ENCODE measurements at regions of chr22 and their contacts with region 1.

Region 1: GRCh38 chr22:32528984-32529982 is 54.7 kb downstream of the FBXO7 start:
- DNase-seq: peak; percentile 93 to 96 (median 94)
- ATAC-seq: peak; percentile 79 to 80
- H3K4me3 ChIP-seq: no peak overlapping the region
- H3K27ac ChIP-seq: peak overlapping the region; percentile 90
- H3K4me1 ChIP-seq: peaks cover 18% of the 10 kb centered on the region
- H3K27me3 ChIP-seq: no peaks in the 10 kb centered on the region

Region 2: DNA sequence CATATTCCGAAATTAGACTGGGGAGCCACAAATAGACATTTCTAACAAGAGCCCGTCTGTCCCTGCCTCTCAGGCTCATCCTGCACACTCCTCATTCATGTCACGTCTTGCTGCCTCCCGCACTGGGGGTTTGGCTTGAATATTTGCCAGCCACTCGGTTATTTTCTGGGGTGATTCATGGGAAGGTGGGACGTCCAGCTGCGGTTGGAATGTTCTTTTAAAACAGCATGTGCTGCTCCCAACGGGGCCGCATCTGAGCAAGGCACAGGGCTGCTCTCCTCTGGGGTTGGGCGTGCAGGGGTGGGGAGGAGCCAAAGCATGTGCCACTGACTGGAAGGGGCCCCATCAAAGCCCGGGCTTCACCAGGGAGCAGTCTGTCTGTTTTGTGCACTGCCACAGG is 248.2 kb before region 1 on chr22:
- intact Hi-C with region 1: no loop called
- DNase-seq: no peak
- ATAC-seq: no peak
- H3K4me3 ChIP-seq: no peak overlapping the region
- H3K27ac ChIP-seq: no peak overlapping the region
- H3K4me1 ChIP-seq: no peaks in the 10 kb centered on the region
- H3K27me3 ChIP-seq: no peaks in the 10 kb centered on the region

Region 3: GRCh38 chr22:32584650-32585049 is 55.4 kb after region 1 on chr22:
- intact Hi-C with region 1: no loop called
- DNase-seq: no peak
- ATAC-seq: peak; percentile 41 to 57
- H3K4me3 ChIP-seq: no peak overlapping the region
- H3K27ac ChIP-seq: no peak overlapping the region
- H3K4me1 ChIP-seq: peaks cover 2% of the 10 kb centered on the region
- H3K27me3 ChIP-seq: no peaks in the 10 kb centered on the region

Region 4: GRCh38 chr22:32603656-32604435 is 74.6 kb after region 1 on chr22:
- intact Hi-C with region 1: no loop called
- DNase-seq: peak in 1 of 3 donors; percentile 61
- ATAC-seq: peak; percentile 55 to 82
- H3K4me3 ChIP-seq: no peak overlapping the region
- H3K27ac ChIP-seq: peak overlapping the region; percentile 30
- H3K4me1 ChIP-seq: peaks cover 3% of the 10 kb centered on the region
- H3K27me3 ChIP-seq: no peaks in the 10 kb centered on the region

Region 5: DNA sequence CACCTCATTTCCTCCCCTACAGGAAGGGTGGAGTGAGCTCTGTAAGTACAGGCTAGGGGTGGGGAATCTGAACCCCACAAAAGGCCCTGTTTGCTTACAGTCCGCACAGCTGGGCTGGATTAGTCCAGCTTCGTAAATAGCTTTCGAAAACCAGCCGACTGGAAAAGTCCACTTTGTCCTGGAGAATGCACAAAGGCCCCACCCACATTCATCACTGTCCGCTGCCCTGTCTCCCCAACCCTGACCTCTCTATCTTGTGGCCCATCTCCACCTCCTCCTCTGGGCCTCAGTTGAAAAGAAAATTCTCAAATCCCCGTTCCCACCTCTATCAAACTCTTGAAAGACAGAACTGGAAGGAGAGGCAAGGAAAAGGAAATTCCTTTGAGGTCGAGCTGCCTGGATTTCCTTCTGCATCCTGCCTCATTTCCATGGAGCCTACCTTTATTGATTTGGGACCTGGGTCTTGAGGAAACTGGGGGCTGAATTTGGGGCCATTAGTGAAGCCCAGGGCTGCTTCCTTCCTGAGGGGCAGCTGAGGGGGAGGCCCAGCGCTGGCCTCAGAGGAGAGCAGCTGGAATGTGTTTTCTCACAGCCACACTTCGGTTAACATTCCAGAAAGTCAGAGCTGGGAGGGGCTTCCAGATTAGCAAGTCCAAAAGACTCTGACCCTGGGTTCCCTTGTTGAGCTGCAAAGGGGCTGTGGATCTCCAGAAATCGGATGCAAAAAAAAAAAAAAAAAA is 92.9 kb after region 1 on chr22:
- intact Hi-C with region 1: loop called in 2 of 4 experiments (anchors 5 to 10 kb)
- DNase-seq: peak; percentile 66 to 83 (median 83)
- ATAC-seq: peak; percentile 64 to 77
- H3K4me3 ChIP-seq: no peak overlapping the region
- H3K27ac ChIP-seq: peak overlapping the region; percentile 97
- H3K4me1 ChIP-seq: peaks cover 55% of the 10 kb centered on the region
- H3K27me3 ChIP-seq: no peaks in the 10 kb centered on the region

Region 6: GRCh38 chr22:32649515-32650200 is 120.4 kb after region 1 on chr22:
- intact Hi-C with region 1: loop called in 1 of 4 experiments (anchors 10 kb)
- DNase-seq: peak in 1 of 3 donors; percentile 60
- ATAC-seq: peak; percentile 33 to 48
- H3K4me3 ChIP-seq: no peak overlapping the region
- H3K27ac ChIP-seq: no peak overlapping the region
- H3K4me1 ChIP-seq: no peaks in the 10 kb centered on the region
- H3K27me3 ChIP-seq: no peaks in the 10 kb centered on the region

Region 7: DNA sequence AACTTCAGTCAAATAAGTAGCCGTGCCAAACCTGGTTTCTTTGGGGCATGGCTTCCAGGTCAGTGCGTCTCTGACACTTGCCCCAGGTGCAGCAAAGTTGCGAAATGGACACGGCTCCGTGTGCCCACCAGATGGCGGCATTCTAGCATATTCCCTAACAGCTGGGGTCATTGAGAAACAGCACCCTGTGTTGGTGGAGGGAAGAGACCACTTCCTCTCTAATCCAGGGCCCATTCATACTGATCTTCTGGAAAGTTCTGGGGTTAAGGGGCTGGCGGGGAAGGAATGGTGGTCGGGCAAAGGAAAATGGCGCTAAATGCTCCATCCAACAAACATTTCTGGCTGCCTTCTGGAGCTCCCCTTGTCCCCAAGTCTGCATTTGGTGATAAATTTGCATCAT is 131.0 kb after region 1 on chr22:
- intact Hi-C with region 1: loop called in 2 of 4 experiments (anchors 2 to 10 kb)
- DNase-seq: peak; percentile 66 to 90 (median 84)
- ATAC-seq: peak; percentile 71 to 73
- H3K4me3 ChIP-seq: no peak overlapping the region
- H3K27ac ChIP-seq: no peak overlapping the region
- H3K4me1 ChIP-seq: peaks cover 6% of the 10 kb centered on the region
- H3K27me3 ChIP-seq: no peaks in the 10 kb centered on the region

Region 8: DNA sequence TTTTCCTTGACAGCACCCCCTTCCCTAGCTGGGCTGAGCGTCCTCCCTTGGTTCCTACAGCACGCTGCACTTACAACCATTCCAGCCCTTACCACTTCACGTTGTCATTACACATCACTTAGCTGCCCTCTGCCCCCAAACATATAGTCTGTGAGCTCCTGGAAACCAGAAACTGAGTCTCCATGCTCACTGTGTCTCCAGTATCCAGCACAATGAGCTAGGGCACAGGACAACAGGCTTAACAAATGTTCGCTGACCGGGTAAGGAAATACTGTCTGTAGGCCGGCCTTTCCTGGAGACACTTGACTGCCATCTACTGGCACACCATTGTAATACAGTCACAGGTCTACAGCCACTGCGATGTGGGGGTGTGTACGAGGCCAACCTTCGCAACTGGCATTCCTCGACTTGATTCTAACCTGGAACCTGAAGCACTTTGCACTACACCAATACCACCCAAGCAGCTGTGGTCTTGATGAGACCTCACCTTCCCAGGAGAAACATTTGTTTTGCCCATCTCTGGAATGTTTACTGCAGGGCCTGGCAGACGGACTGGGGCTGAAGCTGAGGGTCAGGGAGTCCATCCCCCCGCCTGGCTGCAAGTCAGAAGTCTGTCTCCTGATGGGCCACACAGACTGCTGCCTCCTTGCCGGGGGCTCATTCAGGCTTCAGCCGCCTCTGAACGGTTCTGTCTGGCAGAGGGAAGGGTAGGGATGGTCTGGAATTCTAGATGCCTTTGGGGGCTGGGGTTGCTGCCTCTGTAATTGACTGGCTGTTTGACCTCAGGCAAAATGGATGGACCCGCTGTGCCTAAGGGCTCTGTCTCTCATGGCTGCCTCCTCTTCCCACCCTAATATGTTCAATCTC is 456.8 kb after region 1 on chr22:
- intact Hi-C with region 1: loop called in 2 of 4 experiments (anchors 5 kb)
- DNase-seq: peak; percentile 57 to 73 (median 67)
- ATAC-seq: peak; percentile 95 to 96
- H3K4me3 ChIP-seq: no peak overlapping the region
- H3K27ac ChIP-seq: no peak overlapping the region
- H3K4me1 ChIP-seq: no peaks in the 10 kb centered on the region
- H3K27me3 ChIP-seq: no peaks in the 10 kb centered on the region

Region 9: GRCh38 chr22:33000342-33001280 is 471.3 kb after region 1 on chr22:
- intact Hi-C with region 1: loop called (anchors 2 to 5 kb)
- DNase-seq: peak; percentile 66 to 89 (median 88)
- ATAC-seq: peak; percentile 72 to 73
- H3K4me3 ChIP-seq: no peak overlapping the region
- H3K27ac ChIP-seq: no peak overlapping the region
- H3K4me1 ChIP-seq: peaks cover 2% of the 10 kb centered on the region
- H3K27me3 ChIP-seq: no peaks in the 10 kb centered on the region

Region 10: DNA sequence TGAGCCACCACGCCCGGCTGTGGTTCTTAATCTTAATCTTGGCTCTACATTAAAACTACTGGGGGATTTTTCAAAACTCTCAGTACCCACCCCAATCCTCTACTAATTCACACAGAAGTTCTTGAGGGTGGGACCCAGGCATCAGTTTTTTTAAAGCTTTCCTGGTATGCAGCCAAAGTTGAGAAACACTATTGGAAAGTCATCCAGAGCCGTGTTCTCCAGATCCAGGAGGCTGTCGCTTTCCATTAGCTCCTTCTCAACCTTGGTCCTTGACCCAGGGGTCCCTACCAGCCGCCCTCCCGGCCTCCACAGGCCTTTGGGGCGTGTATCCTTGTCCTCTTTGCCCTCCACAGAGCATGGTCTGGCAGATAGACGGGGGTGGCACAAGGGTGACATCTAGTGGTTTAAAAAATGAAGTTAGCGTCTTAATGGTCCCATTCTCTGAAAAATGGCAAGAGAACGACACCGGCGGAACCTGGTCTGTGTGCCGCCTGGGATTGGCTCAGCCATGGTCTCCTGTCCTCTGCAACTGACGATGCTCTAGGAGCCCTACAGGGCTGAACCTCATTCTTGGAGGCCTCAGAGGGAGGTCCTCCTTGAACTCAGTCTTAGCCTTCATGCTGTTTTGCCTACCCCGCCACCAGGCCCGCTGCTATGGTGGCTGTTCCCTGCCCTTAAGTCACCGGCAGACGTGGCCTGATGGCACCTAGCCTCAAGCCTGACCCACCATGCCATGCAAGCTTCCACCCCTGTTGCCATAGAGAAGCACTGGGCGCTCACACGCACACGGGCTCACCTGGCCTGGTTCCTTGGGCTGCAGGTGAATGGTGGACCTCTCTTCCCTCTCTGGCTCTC is 680.9 kb after region 1 on chr22:
- intact Hi-C with region 1: loop called in 1 of 4 experiments (anchors 10 kb)
- DNase-seq: peak in 2 of 3 donors; percentile 17 to 50
- ATAC-seq: peak; percentile 48 to 81
- H3K4me3 ChIP-seq: no peak overlapping the region
- H3K27ac ChIP-seq: no peak overlapping the region
- H3K4me1 ChIP-seq: no peaks in the 10 kb centered on the region
- H3K27me3 ChIP-seq: peaks cover 5% of the 10 kb centered on the region

Measured in right cardiac atrium (tissue), 5 donors.